ENCODE measurements at regions of chr6 and their contacts with region 1.

Region 1: DNA sequence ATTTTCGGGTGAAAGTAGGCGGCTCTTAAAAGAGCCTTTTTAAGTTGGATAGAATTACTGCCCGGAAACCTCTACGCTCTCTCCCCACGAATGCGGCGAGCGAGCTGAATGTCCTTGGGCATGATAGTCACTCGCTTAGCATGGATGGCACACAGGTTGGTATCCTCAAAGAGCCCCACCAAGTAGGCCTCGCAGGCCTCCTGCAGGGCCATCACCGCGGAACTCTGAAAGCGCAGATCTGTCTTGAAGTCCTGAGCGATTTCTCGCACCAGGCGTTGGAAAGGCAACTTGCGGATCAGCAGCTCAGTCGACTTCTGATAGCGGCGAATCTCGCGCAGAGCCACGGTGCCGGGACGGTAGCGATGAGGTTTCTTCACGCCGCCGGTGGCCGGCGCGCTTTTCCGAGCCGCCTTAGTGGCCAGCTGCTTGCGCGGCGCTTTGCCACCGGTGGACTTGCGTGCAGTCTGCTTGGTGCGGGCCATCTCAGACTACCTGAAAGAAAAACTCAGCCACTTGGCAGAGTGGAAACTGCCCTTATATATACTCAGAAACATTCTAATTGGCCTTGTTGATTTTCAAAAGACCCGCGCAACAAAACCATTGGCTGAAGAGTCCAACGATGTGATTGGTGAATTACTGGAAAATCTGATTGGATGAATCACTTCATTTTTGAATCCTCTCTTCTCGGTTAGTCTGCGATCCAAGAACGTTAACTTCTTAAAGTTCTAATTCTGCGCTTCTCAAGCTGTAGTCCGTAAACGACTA is 93.9 kb upstream of the BTN3A2 start:
- DNase-seq: peak; percentile 80
- ATAC-seq: peak; percentile 38
- H3K4me3 Mint-ChIP-seq: no peak overlapping the region
- H3K27ac Mint-ChIP-seq: no peak overlapping the region
- H3K4me1 Mint-ChIP-seq: peaks cover 24% of the 10 kb centered on the region
- H3K27me3 Mint-ChIP-seq: no peaks in the 10 kb centered on the region

Region 2: GRCh38 chr6:26031595-26032339 is 239.3 kb before region 1 on chr6:
- POLR2A ChIA-PET with region 1: interaction called, 68 read pairs
- DNase-seq: peak; percentile 84
- ATAC-seq: peak; percentile 66
- H3K4me3 Mint-ChIP-seq: peak overlapping the region; percentile 88
- H3K27ac Mint-ChIP-seq: peak overlapping the region; percentile 98
- H3K4me1 Mint-ChIP-seq: peaks cover 66% of the 10 kb centered on the region
- H3K27me3 Mint-ChIP-seq: peaks cover 3% of the 10 kb centered on the region

Region 3: DNA sequence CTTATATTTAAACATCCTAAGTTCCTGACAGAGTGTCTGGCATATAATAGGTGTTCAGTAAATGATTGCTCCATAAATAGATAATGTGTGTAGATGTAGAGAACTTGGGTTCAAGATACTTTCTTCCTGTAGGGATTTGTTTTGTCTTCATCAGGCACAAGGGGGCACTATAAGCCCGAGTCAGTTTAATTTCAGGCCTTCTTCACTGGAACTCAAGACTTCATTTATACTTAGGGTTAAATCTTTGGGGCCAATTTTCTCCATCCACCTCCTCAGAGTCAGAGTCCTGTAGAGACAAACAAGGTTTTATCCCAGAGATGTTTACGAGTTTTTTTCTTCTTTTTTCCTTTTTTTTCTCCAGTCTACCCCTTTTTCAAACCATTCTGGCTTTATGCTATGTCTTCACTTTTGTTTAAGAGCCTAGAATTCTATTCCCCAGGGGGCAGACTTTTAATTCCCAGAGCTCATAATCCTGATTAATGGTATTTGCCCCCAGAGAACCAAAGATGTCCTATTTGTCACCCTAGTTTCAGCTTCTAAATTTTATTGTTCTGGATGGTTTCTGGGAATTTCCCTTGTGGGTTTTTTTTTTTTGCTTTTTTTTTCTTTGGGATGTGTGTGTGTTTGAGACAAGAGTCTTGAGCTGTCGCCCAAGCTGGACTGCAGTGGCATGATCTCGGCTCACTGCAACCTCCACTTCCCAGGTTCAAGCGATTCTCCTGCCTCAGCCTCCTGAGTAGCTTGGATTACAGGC is 95.5 kb before region 1 on chr6:
- POLR2A ChIA-PET with region 1: interaction called, 17 read pairs
- DNase-seq: no peak
- ATAC-seq: no peak
- H3K4me3 Mint-ChIP-seq: peak overlapping the region; percentile 54
- H3K27ac Mint-ChIP-seq: peak overlapping the region; percentile 76
- H3K4me1 Mint-ChIP-seq: peaks cover 41% of the 10 kb centered on the region
- H3K27me3 Mint-ChIP-seq: no peaks in the 10 kb centered on the region

Region 4: DNA sequence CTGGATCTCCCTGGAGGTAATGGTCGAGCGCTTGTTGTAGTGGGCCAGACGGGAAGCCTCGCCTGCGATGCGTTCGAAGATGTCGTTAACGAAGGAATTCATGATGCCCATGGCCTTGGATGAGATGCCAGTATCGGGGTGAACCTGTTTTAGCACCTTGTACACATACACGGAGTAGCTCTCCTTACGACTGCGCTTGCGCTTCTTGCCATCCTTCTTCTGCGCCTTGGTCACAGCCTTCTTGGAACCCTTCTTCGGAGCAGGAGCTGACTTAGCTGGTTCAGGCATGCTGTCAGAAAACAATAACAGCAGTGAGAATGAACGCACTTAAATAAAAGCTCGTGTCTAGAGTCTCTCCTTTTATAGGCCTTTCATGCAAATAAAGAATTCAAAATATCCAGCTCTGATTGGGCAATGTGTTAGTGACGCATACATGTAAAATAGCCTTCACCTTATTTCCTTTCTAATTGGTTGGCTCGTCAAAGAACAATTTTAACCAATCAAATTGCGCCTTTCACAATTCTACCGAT is 54.7 kb before region 1 on chr6:
- POLR2A ChIA-PET with region 1: interaction called, 157 read pairs
- DNase-seq: peak; percentile 77
- ATAC-seq: peak; percentile 75
- H3K4me3 Mint-ChIP-seq: no peak overlapping the region
- H3K27ac Mint-ChIP-seq: no peak overlapping the region
- H3K4me1 Mint-ChIP-seq: peaks cover 32% of the 10 kb centered on the region
- H3K27me3 Mint-ChIP-seq: no peaks in the 10 kb centered on the region

Region 5: GRCh38 chr6:26285143-26286134 is 14.4 kb after region 1 on chr6:
- POLR2A ChIA-PET with region 1: interaction called, 486 read pairs
- DNase-seq: peak; percentile 87
- ATAC-seq: peak; percentile 79
- H3K4me3 Mint-ChIP-seq: peak overlapping the region; percentile 72
- H3K27ac Mint-ChIP-seq: peak overlapping the region; percentile 92
- H3K4me1 Mint-ChIP-seq: peaks cover 37% of the 10 kb centered on the region
- H3K27me3 Mint-ChIP-seq: peaks cover 3% of the 10 kb centered on the region

Region 6: DNA sequence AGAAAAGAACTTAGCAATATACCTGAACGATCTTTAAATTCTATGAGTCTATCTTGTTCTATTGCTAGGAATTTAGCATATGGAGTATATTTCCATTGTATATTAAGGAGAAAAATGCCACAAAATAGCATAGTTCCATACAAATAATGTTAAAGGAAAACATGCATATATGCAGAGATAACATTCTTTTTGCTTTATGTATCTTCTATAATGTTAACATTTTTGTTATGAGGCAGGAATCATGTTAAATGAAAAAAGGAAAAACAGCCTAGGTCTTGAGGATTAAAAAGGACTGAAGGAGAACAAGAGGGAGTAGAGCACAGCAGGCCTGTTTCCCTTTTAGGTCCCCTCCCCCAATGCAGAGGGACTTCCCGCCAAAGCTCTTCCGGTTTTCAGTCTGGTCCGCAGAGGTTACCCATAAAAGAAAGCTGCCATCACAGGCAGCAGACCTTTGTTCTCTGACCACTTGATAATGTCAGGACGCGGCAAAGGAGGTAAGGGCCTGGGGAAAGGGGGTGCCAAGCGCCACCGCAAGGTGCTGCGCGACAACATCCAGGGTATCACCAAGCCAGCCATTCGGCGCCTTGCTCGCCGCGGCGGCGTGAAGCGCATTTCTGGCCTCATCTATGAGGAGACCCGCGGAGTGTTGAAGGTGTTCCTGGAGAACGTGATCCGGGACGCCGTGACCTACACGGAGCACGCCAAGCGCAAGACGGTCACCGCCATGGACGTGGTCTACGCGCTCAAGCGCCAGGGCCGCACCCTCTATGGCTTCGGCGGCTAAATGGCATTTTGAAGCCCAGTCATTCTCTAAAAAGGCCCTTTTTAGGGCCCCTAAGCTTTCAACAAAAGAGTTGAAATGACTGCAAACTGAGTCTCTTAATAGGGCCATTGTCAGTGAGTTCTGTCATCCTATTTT is 868.0 kb after region 1 on chr6:
- POLR2A ChIA-PET with region 1: interaction called, 35 read pairs
- DNase-seq: peak; percentile 81
- ATAC-seq: peak; percentile 73
- H3K4me3 Mint-ChIP-seq: peak overlapping the region; percentile 95
- H3K27ac Mint-ChIP-seq: peak overlapping the region; percentile 98
- H3K4me1 Mint-ChIP-seq: peaks cover 39% of the 10 kb centered on the region
- H3K27me3 Mint-ChIP-seq: no peaks in the 10 kb centered on the region

Region 7: GRCh38 chr6:27280064-27280539 is 1009.0 kb after region 1 on chr6:
- POLR2A ChIA-PET with region 1: no interaction called
- DNase-seq: no peak
- ATAC-seq: no peak
- H3K4me3 Mint-ChIP-seq: peak overlapping the region; percentile 65
- H3K27ac Mint-ChIP-seq: no peak overlapping the region
- H3K4me1 Mint-ChIP-seq: peaks cover 18% of the 10 kb centered on the region
- H3K27me3 Mint-ChIP-seq: peaks cover 67% of the 10 kb centered on the region

Region 8: GRCh38 chr6:27871924-27872638 is 1601.0 kb after region 1 on chr6:
- POLR2A ChIA-PET with region 1: interaction called, 29 read pairs
- DNase-seq: peak; percentile 80
- ATAC-seq: peak; percentile 63
- H3K4me3 Mint-ChIP-seq: peak overlapping the region; percentile 92
- H3K27ac Mint-ChIP-seq: peak overlapping the region; percentile 93
- H3K4me1 Mint-ChIP-seq: peaks cover 44% of the 10 kb centered on the region
- H3K27me3 Mint-ChIP-seq: no peaks in the 10 kb centered on the region

Measured in activated naive CD8-positive, alpha-beta T cell treated with anti-CD3 and anti-CD28 coated beads, Interleukin-2, amount 10 ng/mL, durations not matched to agents 7 days and 5 days (primary cell).